ENCODE measurements at regions of chr7 and their contacts with region 1.

Region 1: GRCh38 chr7:15174470-15174869 is 271.9 kb upstream of the DGKB start:
- DNase-seq: no peak
- H3K4me3 ChIP-seq: no peak overlapping the region
- CTCF ChIP-seq: no peak
- POLR2A ChIP-seq: no peak

Region 2: GRCh38 chr7:14630048-14630447 is 544.4 kb before region 1 on chr7:
- intact Hi-C with region 1: no loop called
- DNase-seq: no peak
- H3K4me3 ChIP-seq: no peak overlapping the region
- CTCF ChIP-seq: no peak
- POLR2A ChIP-seq: no peak

Region 3: DNA sequence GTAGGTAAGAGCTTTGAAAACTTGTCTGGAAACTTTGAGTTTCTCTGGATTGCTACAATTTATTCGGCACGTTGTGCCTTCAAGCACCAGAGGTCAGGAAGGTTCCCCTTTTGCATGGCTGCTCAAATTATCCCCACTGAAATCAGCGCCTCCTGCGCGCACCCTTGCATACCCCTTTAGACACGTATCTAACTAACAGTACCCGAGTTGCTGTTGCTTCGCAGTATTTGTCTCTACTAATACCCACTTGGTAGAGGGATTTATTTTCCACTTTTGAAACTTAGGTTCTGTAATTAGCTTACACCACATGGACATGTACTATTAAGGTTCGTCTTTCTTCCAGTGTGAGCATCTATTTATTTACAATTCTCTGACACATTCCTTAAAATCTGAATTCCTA is 510.4 kb after region 1 on chr7:
- intact Hi-C with region 1: loop called (anchors 5 kb)
- DNase-seq: peak in 1 of 2 donors; percentile 32
- H3K4me3 ChIP-seq: no peak overlapping the region
- CTCF ChIP-seq: no peak
- POLR2A ChIP-seq: no peak